Natural killer cell (primary cell): ENCODE measurements at regions of chr4 and their contacts with region 1.

Region 1: GRCh38 chr4:39181905-39182638 is at the start of gene WDR19:
- DNase-seq: peak; percentile 95 to 99
- ATAC-seq: peak; percentile 95 to 99 (median 96)
- H3K4me3 ChIP-seq: peak within 1 kb of the TSS; percentile 90
- H3K4me3 Mint-ChIP-seq: no peak within 1 kb of the TSS
- H3K27ac ChIP-seq: peak within 1 kb of the TSS; percentile 56
- H3K27ac Mint-ChIP-seq: no peak within 1 kb of the TSS
- H3K4me1 ChIP-seq: peaks cover 8% of the 10 kb centered on the region
- H3K4me1 Mint-ChIP-seq: no peaks in the 10 kb centered on the region
- H3K27me3 ChIP-seq: no peaks in the 10 kb centered on the region
- H3K27me3 Mint-ChIP-seq: peaks cover 5 to 7% of the 10 kb centered on the region in 2 donors
- CTCF ChIP-seq: peak; percentile 51
- total RNA-seq, gene WDR19: 12.0 to 19.0 (median 13.8) TPM

Region 2: DNA sequence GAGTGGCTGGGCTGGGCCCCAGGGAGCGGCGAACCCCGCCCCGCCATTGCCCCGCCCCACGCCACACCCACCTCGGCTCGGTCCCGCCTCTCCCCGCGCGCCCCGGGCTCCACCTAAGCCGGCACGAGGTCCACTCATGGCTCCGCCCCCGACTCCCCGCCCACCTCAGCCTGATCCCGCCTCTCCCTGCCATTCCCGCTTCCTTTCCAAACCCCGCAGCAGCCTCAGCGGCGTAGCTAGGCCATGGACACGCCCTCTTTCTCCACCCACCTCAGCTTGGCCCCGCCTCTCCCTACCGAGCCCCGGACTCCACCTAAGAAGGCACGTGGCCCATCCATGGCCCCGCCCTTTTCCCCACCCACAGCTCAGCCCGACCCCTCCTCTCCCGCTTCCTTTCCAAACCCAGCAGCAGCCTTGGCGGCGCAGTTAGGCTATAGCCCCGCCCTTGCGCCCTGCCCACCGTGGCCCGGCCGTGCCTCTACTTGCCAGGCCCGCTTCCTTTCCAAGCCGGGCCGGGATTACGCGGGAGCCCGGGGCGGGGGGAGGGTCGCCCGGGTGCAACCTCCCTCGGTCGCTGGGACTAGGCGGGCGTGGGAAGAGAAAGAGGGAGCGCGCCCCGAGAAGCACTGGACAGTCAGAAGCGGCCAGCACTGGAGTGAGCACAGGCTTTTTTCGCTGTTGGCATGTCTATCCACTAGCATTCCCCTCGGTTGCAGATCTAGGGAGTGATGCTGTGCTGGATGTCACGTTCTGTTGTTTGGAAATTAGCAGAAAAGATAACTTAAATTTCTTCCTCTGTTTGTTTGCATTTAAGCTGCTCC is 1495.5 kb before region 1 on chr4 and contains the start of gene RELL1:
- intact Hi-C with region 1: loop called (anchors 5 kb)
- DNase-seq: peak; percentile 85 to 99
- ATAC-seq: peak; percentile 85 to 94 (median 86)
- H3K4me3 ChIP-seq: peak within 1 kb of the TSS; percentile 64
- H3K4me3 Mint-ChIP-seq: peak within 1 kb of the TSS; percentile 95
- H3K27ac ChIP-seq: peak within 1 kb of the TSS; percentile 66
- H3K27ac Mint-ChIP-seq: peak within 1 kb of the TSS; percentile 85 to 95
- H3K4me1 ChIP-seq: peaks cover 32% of the 10 kb centered on the region
- H3K4me1 Mint-ChIP-seq: peaks cover 37 to 41% of the 10 kb centered on the region in 2 donors
- H3K27me3 ChIP-seq: no peaks in the 10 kb centered on the region
- H3K27me3 Mint-ChIP-seq: no peaks in the 10 kb centered on the region
- CTCF ChIP-seq: no peak
- total RNA-seq, gene RELL1: 15.2 to 21.3 (median 15.2) TPM

Region 3: DNA sequence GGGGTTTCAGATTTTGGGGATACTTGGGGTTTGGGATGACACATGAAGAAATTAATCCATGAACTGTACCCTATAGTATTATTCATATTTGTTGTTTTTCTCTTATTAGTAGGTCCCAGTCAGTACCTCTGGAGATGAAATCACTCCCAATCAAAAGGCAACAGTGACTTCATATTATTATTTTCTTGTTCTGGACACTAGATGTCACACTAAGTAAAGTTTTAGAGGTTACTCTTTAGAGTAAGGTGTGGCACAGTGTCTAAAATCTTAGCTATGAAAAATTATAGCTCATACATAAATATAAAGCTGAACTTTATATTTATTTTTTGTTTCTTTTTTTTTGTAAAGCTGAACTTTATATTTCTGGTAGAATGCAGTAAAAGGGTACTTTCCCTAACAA is 279.4 kb before region 1 on chr4:
- intact Hi-C with region 1: loop called (anchors 1 kb)
- DNase-seq: peak in 1 of 2 donors; percentile 69
- ATAC-seq: peak; percentile 70 to 77 (median 72)
- H3K4me3 ChIP-seq: no peak overlapping the region
- H3K4me3 Mint-ChIP-seq: no peak overlapping the region
- H3K27ac ChIP-seq: no peak overlapping the region
- H3K27ac Mint-ChIP-seq: no peak overlapping the region
- H3K4me1 ChIP-seq: no peaks in the 10 kb centered on the region
- H3K4me1 Mint-ChIP-seq: no peaks in the 10 kb centered on the region
- H3K27me3 ChIP-seq: no peaks in the 10 kb centered on the region
- H3K27me3 Mint-ChIP-seq: peaks cover 5 to 7% of the 10 kb centered on the region in 2 donors
- CTCF ChIP-seq: peak; percentile 65

Region 4: DNA sequence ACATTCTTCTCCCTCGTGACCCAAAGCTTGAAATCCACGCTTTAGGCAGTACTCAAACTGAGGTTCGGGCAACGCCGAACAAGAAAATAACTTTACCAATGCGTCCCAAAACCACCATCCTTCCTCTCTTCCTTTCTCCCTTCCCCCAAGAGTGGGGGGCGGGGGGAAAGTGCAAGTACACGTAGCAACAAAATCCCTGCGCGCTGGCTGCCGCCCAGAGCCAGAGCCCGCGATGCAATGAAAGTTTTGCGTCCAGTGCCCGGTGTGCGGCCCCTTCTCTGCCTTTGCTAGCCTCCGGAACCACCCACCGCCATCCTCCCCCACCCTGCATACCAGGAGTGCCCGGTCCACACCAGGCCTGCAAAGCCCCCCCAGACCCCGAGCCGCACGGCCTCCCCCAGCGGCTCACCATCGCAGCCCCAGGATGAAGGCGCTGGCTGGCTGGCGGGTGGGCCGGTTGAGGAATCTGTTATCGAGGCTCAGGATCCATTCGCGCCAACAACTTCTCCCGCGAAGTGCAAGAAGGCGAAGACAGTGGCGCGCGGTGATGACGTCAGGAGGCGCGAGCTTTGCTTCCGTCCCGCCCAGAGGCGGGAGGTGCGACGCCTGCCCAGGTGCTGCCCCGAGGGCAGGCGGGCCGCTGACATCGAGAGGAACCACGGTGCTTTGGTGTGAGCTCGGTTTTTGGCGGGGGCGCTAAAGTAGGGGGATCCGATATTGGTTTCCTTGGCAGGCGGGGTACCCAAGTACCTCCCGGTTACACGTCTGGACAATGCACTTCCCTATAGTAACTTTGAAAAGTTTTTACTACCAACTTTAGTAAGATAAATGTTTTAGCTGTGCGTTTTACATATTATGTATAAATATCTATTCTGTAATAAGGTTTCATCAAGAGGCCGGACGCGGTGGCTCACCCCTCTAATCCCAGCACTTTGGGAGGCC is 184.0 kb after region 1 on chr4 and contains the start of gene RFC1:
- intact Hi-C with region 1: loop called (anchors 5 kb)
- DNase-seq: peak; percentile 94 to 97
- ATAC-seq: peak; percentile 95 to 98 (median 97)
- H3K4me3 ChIP-seq: peak within 1 kb of the TSS; percentile 95
- H3K4me3 Mint-ChIP-seq: peak within 1 kb of the TSS; percentile 93
- H3K27ac ChIP-seq: peak within 1 kb of the TSS; percentile 59
- H3K27ac Mint-ChIP-seq: peak within 1 kb of the TSS; percentile 89 to 97
- H3K4me1 ChIP-seq: peaks cover 14% of the 10 kb centered on the region
- H3K4me1 Mint-ChIP-seq: peaks cover 27 to 38% of the 10 kb centered on the region in 2 donors
- H3K27me3 ChIP-seq: no peaks in the 10 kb centered on the region
- H3K27me3 Mint-ChIP-seq: no peaks in the 10 kb centered on the region
- CTCF ChIP-seq: no peak
- total RNA-seq, gene RFC1: 74.6 to 103 (median 84.7) TPM

Region 5: GRCh38 chr4:39458505-39459300 is 276.6 kb after region 1 on chr4 and contains the starts of genes LIAS and RPL9:
- intact Hi-C with region 1: loop called (anchors 5 kb)
- DNase-seq: peak; percentile 94 to 99
- ATAC-seq: peak; percentile 80 to 94 (median 87)
- H3K4me3 ChIP-seq: peak within 1 kb of the TSS; percentile 99
- H3K4me3 Mint-ChIP-seq: peak within 1 kb of the TSS; percentile 98
- H3K27ac ChIP-seq: peak within 1 kb of the TSS; percentile 100
- H3K27ac Mint-ChIP-seq: peak within 1 kb of the TSS; percentile 99 to 100
- H3K4me1 ChIP-seq: peaks cover 19% of the 10 kb centered on the region
- H3K4me1 Mint-ChIP-seq: peaks cover 28 to 34% of the 10 kb centered on the region in 2 donors
- H3K27me3 ChIP-seq: no peaks in the 10 kb centered on the region
- H3K27me3 Mint-ChIP-seq: no peaks in the 10 kb centered on the region
- CTCF ChIP-seq: no peak
- total RNA-seq, gene LIAS: 10.6 to 14.3 (median 11.9) TPM
- total RNA-seq, gene RPL9: 848 to 1,179 (median 853) TPM

Region 6: GRCh38 chr4:39527273-39528060 is 345.4 kb after region 1 on chr4 and contains the start of gene UGDH:
- intact Hi-C with region 1: loop called (anchors 5 kb)
- DNase-seq: peak; percentile 91 to 95
- ATAC-seq: peak; percentile 98 to 100 (median 99)
- H3K4me3 ChIP-seq: peak within 1 kb of the TSS; percentile 93
- H3K4me3 Mint-ChIP-seq: peak within 1 kb of the TSS; percentile 96
- H3K27ac ChIP-seq: peak within 1 kb of the TSS; percentile 68
- H3K27ac Mint-ChIP-seq: peak within 1 kb of the TSS; percentile 78 to 92
- H3K4me1 ChIP-seq: peaks cover 18% of the 10 kb centered on the region
- H3K4me1 Mint-ChIP-seq: peaks cover 13 to 20% of the 10 kb centered on the region in 2 donors
- H3K27me3 ChIP-seq: no peaks in the 10 kb centered on the region
- H3K27me3 Mint-ChIP-seq: no peaks in the 10 kb centered on the region
- CTCF ChIP-seq: no peak
- total RNA-seq, gene UGDH: 12.2 to 14.8 (median 13.6) TPM

Region 7: GRCh38 chr4:39697740-39698423 is 515.8 kb after region 1 on chr4 and contains the start of gene UBE2K:
- intact Hi-C with region 1: loop called (anchors 5 kb)
- DNase-seq: peak; percentile 89 to 95
- ATAC-seq: peak; percentile 78 to 93 (median 88)
- H3K4me3 ChIP-seq: peak within 1 kb of the TSS; percentile 100
- H3K4me3 Mint-ChIP-seq: peak within 1 kb of the TSS; percentile 98
- H3K27ac ChIP-seq: peak within 1 kb of the TSS; percentile 91
- H3K27ac Mint-ChIP-seq: peak within 1 kb of the TSS; percentile 91 to 99
- H3K4me1 ChIP-seq: peaks cover 17% of the 10 kb centered on the region
- H3K4me1 Mint-ChIP-seq: peaks cover 36 to 45% of the 10 kb centered on the region in 2 donors
- H3K27me3 ChIP-seq: no peaks in the 10 kb centered on the region
- H3K27me3 Mint-ChIP-seq: no peaks in the 10 kb centered on the region
- CTCF ChIP-seq: no peak
- total RNA-seq, gene UBE2K: 38.0 to 53.9 (median 43.6) TPM